GM12878 (cell line): ENCODE measurements at regions of chr11 and their contacts with region 1.

Region 1: DNA sequence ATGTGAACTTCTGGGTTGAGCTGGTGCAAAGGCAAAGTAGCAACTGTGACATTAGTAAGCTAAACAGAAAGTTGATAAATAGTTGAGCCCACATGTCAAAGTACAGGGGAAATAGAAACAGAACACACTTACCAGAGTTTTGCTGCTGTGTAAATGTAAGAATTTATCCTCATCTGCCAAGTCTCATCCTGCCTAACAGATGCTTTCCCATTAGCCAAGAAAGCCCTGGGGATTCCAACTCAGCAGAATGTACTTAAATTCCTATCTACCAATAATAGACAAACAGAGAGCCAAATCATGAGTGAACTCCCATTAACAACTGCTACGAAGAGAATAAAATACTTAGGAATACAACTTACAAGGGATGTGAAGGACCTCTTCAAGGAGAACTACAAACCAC is 7.3 kb upstream of the OR51A2 start:
- DNase-seq: no peak
- ATAC-seq: no peak
- H3K4me3 ChIP-seq: no peak overlapping the region
- H3K27ac ChIP-seq: no peak overlapping the region
- H3K4me1 ChIP-seq: no peaks in the 10 kb centered on the region
- H3K27me3 ChIP-seq: no peaks in the 10 kb centered on the region
- CTCF ChIP-seq: no peak
- EP300 ChIP-seq: no peak
- POLR2A ChIP-seq: no peak
- RAD21 ChIP-seq: no peak

Region 2: GRCh38 chr11:4697585-4697984 is 265.2 kb before region 1 on chr11 and contains the start of gene OR51E2:
- CTCF ChIA-PET with region 1: no interaction called
- POLR2A ChIA-PET with region 1: no interaction called
- RAD21 ChIA-PET with region 1: no interaction called
- SMC1A ChIA-PET with region 1: no interaction called
- in situ Hi-C with region 1: no loop called
- intact Hi-C with region 1: no loop called
- DNase-seq: no peak
- ATAC-seq: no peak
- H3K4me3 ChIP-seq: no peak within 1 kb of the TSS
- H3K27ac ChIP-seq: no peak within 1 kb of the TSS
- H3K4me1 ChIP-seq: no peaks in the 10 kb centered on the region; the same call in 1 of the 2 replicates
- H3K27me3 ChIP-seq: no peaks in the 10 kb centered on the region; a peak in 1 of 4 replicates
- CTCF ChIP-seq: no peak
- EP300 ChIP-seq: no peak
- POLR2A ChIP-seq: no peak
- RAD21 ChIP-seq: no peak
- polyA plus RNA-seq, gene OR51E2: not detected

Region 3: GRCh38 chr11:4947505-4947904 is 15.3 kb before region 1 on chr11 and contains the start of gene OR51A4:
- CTCF ChIA-PET with region 1: no interaction called
- POLR2A ChIA-PET with region 1: no interaction called
- RAD21 ChIA-PET with region 1: no interaction called
- SMC1A ChIA-PET with region 1: no interaction called
- in situ Hi-C with region 1: no loop called
- intact Hi-C with region 1: loop called (anchors 2 kb)
- DNase-seq: no peak
- ATAC-seq: no peak
- H3K4me3 ChIP-seq: no peak within 1 kb of the TSS
- H3K27ac ChIP-seq: no peak within 1 kb of the TSS
- H3K4me1 ChIP-seq: no peaks in the 10 kb centered on the region
- H3K27me3 ChIP-seq: no peaks in the 10 kb centered on the region
- CTCF ChIP-seq: no peak
- EP300 ChIP-seq: no peak
- POLR2A ChIP-seq: no peak
- RAD21 ChIP-seq: no peak
- polyA plus RNA-seq, gene OR51A4: not detected

Region 4: GRCh38 chr11:5234381-5234834 is 271.6 kb after region 1 on chr11 and contains the start of gene HBD:
- CTCF ChIA-PET with region 1: no interaction called
- POLR2A ChIA-PET with region 1: no interaction called
- RAD21 ChIA-PET with region 1: no interaction called
- SMC1A ChIA-PET with region 1: no interaction called
- in situ Hi-C with region 1: no loop called
- intact Hi-C with region 1: no loop called
- DNase-seq: no peak
- ATAC-seq: peak; percentile 46
- H3K4me3 ChIP-seq: no peak within 1 kb of the TSS
- H3K27ac ChIP-seq: no peak within 1 kb of the TSS
- H3K4me1 ChIP-seq: no peaks in the 10 kb centered on the region; the same call in 1 of the 2 replicates
- H3K27me3 ChIP-seq: no peaks in the 10 kb centered on the region
- CTCF ChIP-seq: no peak
- EP300 ChIP-seq: no peak
- POLR2A ChIP-seq: no peak
- RAD21 ChIP-seq: no peak
- polyA plus RNA-seq, gene HBD: 0.11 to 0.32 TPM